ENCODE measurements at regions of chr6 and their contacts with region 1.

Region 1: DNA sequence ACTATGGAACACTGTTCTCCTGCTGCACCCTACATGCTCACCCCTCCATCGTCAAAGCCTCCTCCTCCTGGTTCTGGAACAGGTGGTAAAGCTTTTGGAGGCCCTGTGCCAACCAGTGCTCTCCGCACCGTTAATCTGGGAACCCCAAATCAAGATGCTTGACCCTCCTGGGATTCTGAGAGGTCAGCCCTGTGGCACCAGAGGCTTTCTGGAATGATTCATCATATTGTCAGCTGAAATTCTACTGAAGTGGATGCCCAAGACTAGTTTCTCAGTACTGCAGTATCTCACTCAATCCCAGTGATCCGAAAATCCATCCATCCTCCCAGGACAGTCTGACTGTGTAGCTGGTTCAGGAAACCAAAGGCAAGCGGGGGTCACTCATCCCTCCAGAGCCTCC is 92.7 kb downstream of the TRERF1 start:
- DNase-seq: no peak
- H3K4me3 ChIP-seq: no peak overlapping the region
- H3K27ac ChIP-seq: no peak overlapping the region
- H3K4me1 ChIP-seq: no peaks in the 10 kb centered on the region
- CTCF ChIP-seq: no peak

Region 2: DNA sequence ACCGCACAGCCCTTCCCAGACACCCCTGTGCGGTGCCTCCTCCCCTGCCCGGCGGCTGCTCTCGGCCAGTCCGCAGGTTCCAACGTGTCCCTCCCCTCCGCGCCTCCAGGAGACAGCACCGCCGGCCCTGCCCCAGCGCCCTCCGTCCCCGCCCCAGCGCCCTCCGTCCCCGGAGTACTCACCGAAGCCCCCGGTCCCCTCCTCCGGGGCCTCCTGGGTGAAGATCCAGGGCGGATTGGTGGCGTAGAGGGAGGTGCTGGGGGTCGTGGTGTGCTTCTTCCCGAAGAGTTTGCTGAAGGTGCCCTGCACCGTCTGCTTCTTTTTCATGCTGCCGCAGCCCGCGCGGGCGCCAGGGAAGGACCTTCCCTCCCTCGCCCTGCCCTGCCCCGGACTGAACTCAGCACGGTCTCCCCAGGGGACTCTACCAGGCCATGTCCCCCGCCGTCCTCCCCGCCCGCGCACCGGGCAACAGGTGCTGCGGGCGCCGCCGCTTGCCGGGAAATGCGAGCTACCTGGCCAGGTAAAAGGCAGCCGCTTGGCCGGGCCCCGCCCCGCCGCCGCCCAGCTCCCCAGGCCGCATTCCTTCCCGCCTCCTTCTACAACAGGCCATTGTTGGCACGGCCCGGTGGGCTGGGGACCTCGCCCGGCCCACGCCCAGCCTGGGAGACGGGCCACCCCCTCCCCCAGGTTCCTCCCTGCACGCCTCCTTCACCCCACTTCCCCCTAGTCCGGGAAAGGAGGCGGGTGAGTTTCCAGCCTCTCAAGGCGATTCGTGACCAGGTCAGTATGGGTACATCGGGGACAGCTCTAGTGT is 216.7 kb before region 1 on chr6 and contains the start of gene C6orf132:
- CTCF ChIA-PET with region 1: no interaction called
- POLR2A ChIA-PET with region 1: interaction called, 11 read pairs
- intact Hi-C with region 1: no loop called
- DNase-seq: no peak
- H3K4me3 ChIP-seq: no peak within 1 kb of the TSS
- H3K27ac ChIP-seq: no peak within 1 kb of the TSS
- H3K4me1 ChIP-seq: no peaks in the 10 kb centered on the region
- CTCF ChIP-seq: no peak
- total RNA-seq, gene C6orf132: 0.03 TPM in 2 replicates

Region 3: GRCh38 chr6:42260972-42261371 is 98.0 kb before region 1 on chr6:
- CTCF ChIA-PET with region 1: no interaction called
- POLR2A ChIA-PET with region 1: no interaction called
- intact Hi-C with region 1: no loop called
- DNase-seq: peak; percentile 58
- H3K4me3 ChIP-seq: peak overlapping the region; percentile 42
- H3K27ac ChIP-seq: no peak overlapping the region
- H3K4me1 ChIP-seq: peaks cover 8% of the 10 kb centered on the region
- CTCF ChIP-seq: peak; percentile 77